PC-9 (cell line): ENCODE measurements at regions of chr22 and their contacts with region 1.

Region 1: DNA sequence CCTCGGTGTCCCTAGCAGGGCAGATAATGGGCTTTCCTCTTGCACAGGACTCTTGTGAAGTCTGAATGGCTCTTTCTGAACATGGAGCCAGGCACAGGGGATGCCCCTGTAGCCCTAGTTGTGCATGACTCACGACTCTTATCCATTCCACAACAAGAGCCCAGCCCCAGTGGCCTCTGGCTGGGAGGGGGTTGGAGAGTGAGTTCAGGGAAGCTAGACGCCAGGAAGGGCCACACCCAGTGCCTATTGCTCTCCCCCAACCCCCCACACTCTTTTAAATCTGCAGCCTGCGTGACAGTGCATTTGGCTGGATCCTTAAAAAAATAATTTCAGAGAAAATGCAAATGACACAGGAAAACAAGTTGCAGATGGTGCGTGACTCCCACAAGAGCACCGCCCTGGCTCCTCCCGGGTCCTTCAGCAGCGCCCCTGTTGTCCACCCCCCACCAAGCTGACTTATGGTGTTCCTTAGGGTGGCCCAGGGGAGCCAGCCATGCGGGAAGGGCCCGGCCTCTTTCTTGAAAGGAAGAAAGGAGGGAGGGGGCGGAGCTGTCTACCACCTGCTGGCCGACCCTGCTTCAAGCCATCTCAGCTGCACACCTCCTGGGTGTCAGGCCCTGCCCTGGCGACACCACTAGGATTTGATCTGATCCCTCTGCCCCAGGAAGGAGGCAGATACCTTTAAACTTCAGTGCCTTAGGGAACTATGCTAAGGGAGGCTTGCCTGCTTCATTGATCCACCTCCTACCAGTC is 74.7 kb downstream of the MN1 start:
- DNase-seq: peak; percentile 83 to 84
- H3K4me3 ChIP-seq: peak overlapping the region; percentile 23; the same call in 1 of the 2 replicates
- H3K27ac ChIP-seq: peak overlapping the region; percentile 76
- H3K4me1 ChIP-seq: peaks cover 29% of the 10 kb centered on the region
- H3K27me3 ChIP-seq: no peaks in the 10 kb centered on the region
- CTCF ChIP-seq: no peak

Region 2: DNA sequence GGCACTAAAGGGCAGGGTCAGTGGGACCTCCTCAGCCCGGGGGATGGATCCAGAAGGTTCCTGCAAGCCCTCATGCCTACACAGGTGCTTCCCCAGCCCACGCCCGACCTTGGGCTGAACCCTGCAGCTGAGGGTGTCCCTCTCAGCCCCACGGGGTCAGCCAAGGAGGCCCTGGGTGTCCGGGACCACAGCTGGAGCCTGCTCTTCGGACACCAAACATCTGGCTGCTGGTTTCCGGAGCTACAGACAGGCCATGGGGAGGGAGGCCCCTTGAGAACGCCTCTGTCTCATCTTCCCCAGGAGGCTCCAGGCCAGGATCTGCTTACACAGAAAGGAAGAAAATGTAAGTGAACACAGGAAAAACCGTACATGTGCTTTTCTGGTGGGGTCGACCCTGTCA is 281.0 kb before region 1 on chr22:
- CTCF ChIA-PET with region 1: no interaction called
- POLR2A ChIA-PET with region 1: no interaction called
- intact Hi-C with region 1: no loop called
- DNase-seq: no peak
- H3K4me3 ChIP-seq: no peak overlapping the region
- H3K27ac ChIP-seq: no peak overlapping the region
- H3K4me1 ChIP-seq: no peaks in the 10 kb centered on the region
- H3K27me3 ChIP-seq: no peaks in the 10 kb centered on the region
- CTCF ChIP-seq: no peak

Region 3: GRCh38 chr22:27627444-27627833 is 99.4 kb before region 1 on chr22:
- CTCF ChIA-PET with region 1: no interaction called
- POLR2A ChIA-PET with region 1: no interaction called
- intact Hi-C with region 1: loop called (anchors 10 kb)
- DNase-seq: no peak
- H3K4me3 ChIP-seq: no peak overlapping the region
- H3K27ac ChIP-seq: no peak overlapping the region
- H3K4me1 ChIP-seq: peaks cover 27% of the 10 kb centered on the region
- H3K27me3 ChIP-seq: no peaks in the 10 kb centered on the region
- CTCF ChIP-seq: no peak

Region 4: GRCh38 chr22:27752771-27753170 is 25.9 kb after region 1 on chr22:
- CTCF ChIA-PET with region 1: no interaction called
- POLR2A ChIA-PET with region 1: interaction called, 14 read pairs
- intact Hi-C with region 1: no loop called
- DNase-seq: peak; percentile 45 to 66
- H3K4me3 ChIP-seq: no peak overlapping the region
- H3K27ac ChIP-seq: no peak overlapping the region
- H3K4me1 ChIP-seq: peaks cover 11% of the 10 kb centered on the region
- H3K27me3 ChIP-seq: no peaks in the 10 kb centered on the region
- CTCF ChIP-seq: no peak